Dendritic cell treated with granulocyte-macrophage colony-stimulating factor and Interleukin-4, amounts not matched to agents 40 ng/mL and 50 ng/mL, for 4 days (primary cell): ENCODE measurements at regions of chr1 and their contacts with region 1.

Region 1: DNA sequence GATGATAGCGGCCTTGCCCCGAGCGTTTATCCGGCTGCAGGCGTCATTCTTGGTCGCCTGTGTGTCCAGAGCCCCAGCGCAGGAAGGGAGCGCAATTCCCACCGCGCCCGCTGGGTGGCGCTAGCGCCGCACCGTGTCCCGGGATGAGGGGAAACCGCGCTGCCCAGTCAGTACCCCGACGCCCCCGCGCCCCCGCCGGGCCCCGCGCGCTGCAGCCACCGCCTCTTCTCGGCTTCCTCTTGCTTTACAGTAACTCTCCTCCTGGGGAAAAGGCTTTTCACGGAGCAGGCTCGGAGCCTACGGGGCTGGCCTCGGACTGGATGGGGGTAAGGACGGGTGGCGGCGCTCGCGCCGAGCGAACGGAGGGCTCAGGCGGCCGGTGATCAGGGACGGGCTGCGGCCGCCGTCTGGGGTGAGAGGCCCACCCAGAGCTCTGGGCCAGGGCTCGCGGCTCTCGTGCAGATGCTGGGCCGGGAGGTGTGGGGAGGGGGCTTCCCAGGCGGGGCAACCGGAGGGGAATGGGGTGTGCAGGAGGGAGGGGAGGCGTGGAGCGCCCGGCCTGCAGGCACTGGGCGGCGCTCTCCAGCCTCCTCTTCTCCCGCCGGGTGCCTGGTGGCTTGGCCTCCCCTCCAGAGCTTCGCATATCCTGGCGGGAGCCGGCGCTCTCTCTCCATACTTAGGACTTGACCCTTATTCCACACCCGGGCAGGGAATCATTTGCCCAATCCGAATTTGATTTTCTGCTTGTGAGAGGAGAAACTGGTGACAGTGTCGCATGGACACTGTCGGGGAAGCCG is 29.8 kb downstream of the TEX35 start:
- H3K4me3 Mint-ChIP-seq: peak overlapping the region; percentile 93
- H3K27ac Mint-ChIP-seq: peak overlapping the region; percentile 91
- H3K4me1 Mint-ChIP-seq: peaks cover 13% of the 10 kb centered on the region
- H3K27me3 Mint-ChIP-seq: peaks cover 2% of the 10 kb centered on the region

Region 2: DNA sequence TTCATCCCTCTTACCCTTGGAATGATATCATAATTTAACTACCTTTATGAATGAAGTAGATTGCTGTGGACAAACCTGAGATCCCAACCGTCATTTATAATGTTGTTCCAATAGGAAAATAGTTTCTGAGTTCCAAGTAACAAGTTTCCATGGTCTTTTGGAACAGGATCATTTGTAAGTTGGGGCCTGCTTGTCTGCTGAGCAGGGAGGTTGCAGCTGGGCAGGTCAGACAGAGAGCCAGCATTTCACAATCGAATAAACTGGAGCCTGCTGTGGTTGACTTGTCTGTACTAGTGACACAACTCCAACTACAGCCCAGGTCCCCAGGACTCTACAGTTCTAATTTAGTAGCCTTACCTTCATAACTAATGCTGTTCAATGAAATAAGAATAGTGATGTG is 163.7 kb after region 1 on chr1:
- intact Hi-C with region 1: no loop called
- H3K4me3 Mint-ChIP-seq: no peak overlapping the region
- H3K27ac Mint-ChIP-seq: no peak overlapping the region
- H3K4me1 Mint-ChIP-seq: no peaks in the 10 kb centered on the region
- H3K27me3 Mint-ChIP-seq: no peaks in the 10 kb centered on the region

Region 3: DNA sequence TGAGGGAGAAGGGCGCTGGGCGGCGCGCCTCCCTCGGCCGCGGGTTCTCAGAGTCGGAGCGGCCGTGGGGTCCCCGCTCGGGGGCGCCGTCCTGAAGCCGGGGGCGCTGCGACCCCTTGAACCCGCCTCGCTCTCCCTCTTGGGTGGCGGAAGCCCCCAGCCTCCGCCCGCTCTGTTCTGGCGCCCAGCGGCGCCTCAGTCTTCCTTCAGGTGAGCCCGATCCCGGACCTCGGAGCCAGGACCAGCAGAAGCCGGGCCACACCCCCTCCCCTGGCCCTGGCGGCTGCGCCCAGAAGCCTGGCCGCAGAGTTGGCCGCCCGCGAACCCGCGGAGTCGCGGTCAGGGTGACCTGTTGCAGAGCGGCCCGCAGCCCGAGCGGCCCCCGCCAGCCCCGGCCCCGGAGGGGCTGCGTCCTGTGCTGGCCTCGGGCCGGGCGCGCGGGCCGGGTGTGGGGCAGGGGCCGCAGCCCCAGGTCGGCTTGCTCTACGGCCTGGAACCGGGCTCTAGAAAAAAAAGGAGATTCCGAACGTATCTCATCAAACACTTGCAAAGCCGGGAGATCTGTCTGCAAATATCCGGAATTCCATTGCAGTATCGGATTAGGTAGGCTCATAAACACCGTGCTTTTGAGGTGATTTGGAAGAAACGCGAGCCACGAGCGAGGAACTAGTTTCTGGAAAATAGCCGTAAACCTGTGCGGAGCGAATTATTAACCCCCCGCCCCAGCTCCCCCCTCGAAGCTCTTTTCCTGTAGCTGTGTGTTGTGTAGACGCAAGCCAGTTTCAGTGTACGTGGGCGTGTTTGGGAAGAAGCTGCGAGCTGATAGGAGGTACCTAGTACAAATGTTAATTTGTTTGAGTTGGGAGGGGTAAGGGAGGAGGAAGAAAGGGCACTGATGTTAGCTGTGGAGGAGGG is 183.1 kb after region 1 on chr1:
- intact Hi-C with region 1: loop called (anchors 10 kb)
- H3K4me3 Mint-ChIP-seq: peak overlapping the region; percentile 87
- H3K27ac Mint-ChIP-seq: peak overlapping the region; percentile 77
- H3K4me1 Mint-ChIP-seq: peaks cover 20% of the 10 kb centered on the region
- H3K27me3 Mint-ChIP-seq: no peaks in the 10 kb centered on the region

Region 4: GRCh38 chr1:178752891-178753290 is 210.1 kb after region 1 on chr1:
- intact Hi-C with region 1: loop called (anchors 1 kb)
- H3K4me3 Mint-ChIP-seq: no peak overlapping the region
- H3K27ac Mint-ChIP-seq: no peak overlapping the region
- H3K4me1 Mint-ChIP-seq: no peaks in the 10 kb centered on the region
- H3K27me3 Mint-ChIP-seq: no peaks in the 10 kb centered on the region

Region 5: GRCh38 chr1:179081687-179082332 is 539.1 kb after region 1 on chr1 and contains the start of gene TOR3A:
- intact Hi-C with region 1: loop called (anchors 5 kb)
- H3K4me3 Mint-ChIP-seq: peak within 1 kb of the TSS; percentile 92
- H3K27ac Mint-ChIP-seq: peak within 1 kb of the TSS; percentile 89
- H3K4me1 Mint-ChIP-seq: peaks cover 41% of the 10 kb centered on the region
- H3K27me3 Mint-ChIP-seq: no peaks in the 10 kb centered on the region